K562 (cell line): ENCODE measurements at regions of chr9 and their contacts with region 1.

Region 1: GRCh38 chr9:121545875-121546423 is 46.3 kb upstream of the GGTA1 start:
- DNase-seq: peak; percentile 93 to 95 (median 94)
- ATAC-seq: peak; percentile 99
- H3K4me3 ChIP-seq: no peak overlapping the region
- H3K27ac ChIP-seq: no peak overlapping the region
- H3K4me1 ChIP-seq: peaks cover 0 to 18% of the 10 kb centered on the region in 2 experiments; a peak in 2 of 5 replicates
- H3K27me3 ChIP-seq: peaks cover 0 to 20% of the 10 kb centered on the region in 2 experiments; a peak in 2 of 5 replicates
- CTCF ChIP-seq: peak; percentile 91 to 95 (median 95)
- EP300 ChIP-seq: no peak
- POLR2A ChIP-seq: no peak
- RAD21 ChIP-seq: peak; percentile 88 to 90

Region 2: DNA sequence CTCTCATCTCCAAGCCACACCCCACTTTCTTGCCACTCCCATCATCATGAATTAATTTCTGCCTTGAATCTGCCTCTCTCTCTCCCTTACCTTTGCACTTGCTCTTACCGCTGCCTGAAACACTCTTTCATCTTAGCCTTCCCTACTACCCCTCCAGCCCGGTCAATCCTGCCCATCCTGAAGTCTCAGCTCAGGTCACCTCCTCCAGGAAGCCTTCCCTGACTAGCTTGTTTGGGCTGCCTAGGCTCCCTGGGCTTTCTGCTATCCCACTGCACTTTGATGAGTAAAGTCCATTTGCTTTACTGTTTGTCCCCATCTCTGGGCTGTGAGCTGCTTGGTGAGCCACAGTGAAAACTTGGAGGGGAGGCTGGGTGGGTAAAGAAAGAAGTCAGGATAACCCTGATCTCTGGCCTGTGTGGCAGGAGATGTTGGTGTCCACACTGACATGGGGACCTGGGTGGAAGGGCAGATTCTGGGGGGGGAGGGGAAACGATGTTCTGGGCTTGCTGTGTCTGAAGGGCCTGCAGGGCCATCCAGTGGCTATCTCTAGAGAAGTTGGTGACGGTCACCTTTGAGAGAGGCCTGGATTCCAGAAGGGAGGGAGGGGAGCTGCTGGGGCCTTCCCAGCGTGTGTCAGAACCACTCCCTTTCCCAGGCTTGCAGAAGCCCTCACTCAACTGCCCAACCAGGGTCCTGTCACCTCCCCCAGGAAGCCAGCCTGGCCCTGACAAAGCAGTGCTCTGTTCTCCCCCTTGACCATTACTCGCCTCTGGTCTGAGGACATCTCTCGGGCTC is 30.5 kb after region 1 on chr9:
- CTCF ChIA-PET with region 1: no interaction called
- POLR2A ChIA-PET with region 1: no interaction called
- in situ Hi-C with region 1: no loop called
- intact Hi-C with region 1: loop called (anchors 2 kb)
- DNase-seq: peak in 1 of 4 experiments; percentile 12
- ATAC-seq: peak; percentile 66
- H3K4me3 ChIP-seq: no peak overlapping the region
- H3K27ac ChIP-seq: no peak overlapping the region
- H3K4me1 ChIP-seq: peaks cover 0 to 7% of the 10 kb centered on the region in 2 experiments; a peak in 2 of 5 replicates
- H3K27me3 ChIP-seq: peaks cover 3 to 50% of the 10 kb centered on the region in 2 experiments; a peak in 3 of 5 replicates
- CTCF ChIP-seq: peak in 2 of 3 experiments; percentile 18 to 37; a peak in 3 of 6 replicates
- EP300 ChIP-seq: no peak
- POLR2A ChIP-seq: no peak
- RAD21 ChIP-seq: peak in 1 of 2 experiments; percentile 36; a peak in 1 of 4 replicates

Region 3: GRCh38 chr9:121621113-121621449 is 75.1 kb after region 1 on chr9:
- CTCF ChIA-PET with region 1: no interaction called
- POLR2A ChIA-PET with region 1: no interaction called
- in situ Hi-C with region 1: no loop called
- intact Hi-C with region 1: loop called (anchors 5 kb)
- DNase-seq: peak; percentile 50 to 67 (median 56)
- ATAC-seq: peak; percentile 96
- H3K4me3 ChIP-seq: no peak overlapping the region
- H3K27ac ChIP-seq: no peak overlapping the region
- H3K4me1 ChIP-seq: no peaks in the 10 kb centered on the region
- H3K27me3 ChIP-seq: peaks cover 3 to 34% of the 10 kb centered on the region in 2 experiments; a peak in 3 of 5 replicates
- CTCF ChIP-seq: peak; percentile 69 to 80 (median 76)
- EP300 ChIP-seq: no peak
- POLR2A ChIP-seq: no peak
- RAD21 ChIP-seq: peak; percentile 12 to 59; a peak in 2 of 4 replicates

Region 4: DNA sequence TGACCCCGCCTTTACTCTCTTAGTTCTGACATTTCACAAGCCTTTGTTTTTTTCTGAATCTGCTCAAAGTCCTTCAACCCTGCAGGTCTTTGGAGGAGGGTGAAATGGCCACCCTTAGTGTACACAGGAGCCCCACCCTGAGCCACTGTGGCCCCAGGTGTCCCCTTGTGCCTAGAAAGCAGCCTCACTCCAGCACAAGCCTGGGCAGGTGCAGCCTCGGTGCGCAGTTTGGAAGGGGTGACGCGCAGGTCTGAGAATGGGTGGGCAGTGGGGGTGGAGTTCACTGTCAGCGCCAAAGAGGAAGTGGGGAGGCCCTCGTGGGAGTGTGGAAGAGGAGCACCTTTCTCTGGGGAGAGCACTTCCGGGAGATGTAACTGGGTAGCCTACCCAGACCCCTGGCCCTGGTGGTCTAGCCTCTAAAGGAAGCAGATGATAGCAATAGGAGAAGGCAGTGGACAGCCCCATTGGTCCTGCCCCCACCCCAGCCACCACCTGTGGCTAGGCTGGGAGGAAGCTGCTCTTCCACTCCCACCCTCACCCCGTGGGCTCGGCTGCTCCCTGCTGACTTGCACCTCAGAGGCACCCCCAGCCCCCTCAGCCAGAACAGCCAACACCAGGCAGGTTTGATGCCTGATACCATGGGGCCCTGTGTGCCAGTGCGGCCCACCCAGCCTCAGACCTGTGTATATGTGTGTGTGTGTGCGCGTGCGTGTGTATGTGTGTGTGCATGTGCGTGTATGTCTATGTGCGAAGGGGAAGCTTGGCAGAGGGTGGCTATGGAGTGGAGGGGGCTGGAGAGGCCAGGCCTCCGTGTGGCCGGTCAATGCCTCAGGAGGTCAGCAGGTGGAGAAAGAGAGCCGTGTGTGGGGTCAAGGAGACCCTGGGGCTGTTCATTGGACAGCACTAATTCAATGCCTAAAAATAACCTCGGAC is 88.6 kb after region 1 on chr9:
- CTCF ChIA-PET with region 1: no interaction called
- POLR2A ChIA-PET with region 1: no interaction called
- in situ Hi-C with region 1: no loop called
- intact Hi-C with region 1: loop called (anchors 5 kb)
- DNase-seq: peak; percentile 55 to 67 (median 63)
- ATAC-seq: peak; percentile 95
- H3K4me3 ChIP-seq: no peak overlapping the region
- H3K27ac ChIP-seq: no peak overlapping the region
- H3K4me1 ChIP-seq: peaks cover 0 to 6% of the 10 kb centered on the region in 2 experiments; a peak in 2 of 5 replicates
- H3K27me3 ChIP-seq: peaks cover 0 to 51% of the 10 kb centered on the region in 2 experiments; a peak in 3 of 5 replicates
- CTCF ChIP-seq: peak; percentile 73 to 78 (median 77)
- EP300 ChIP-seq: no peak
- POLR2A ChIP-seq: no peak
- RAD21 ChIP-seq: peak; percentile 55 to 68

Region 5: GRCh38 chr9:121645003-121645402 is 99.1 kb after region 1 on chr9:
- CTCF ChIA-PET with region 1: no interaction called
- POLR2A ChIA-PET with region 1: no interaction called
- in situ Hi-C with region 1: no loop called
- intact Hi-C with region 1: no loop called
- DNase-seq: no peak
- ATAC-seq: no peak; the same call in 2 of the 3 replicates
- H3K4me3 ChIP-seq: no peak overlapping the region
- H3K27ac ChIP-seq: no peak overlapping the region
- H3K4me1 ChIP-seq: peaks cover 0 to under 1% of the 10 kb centered on the region in 2 experiments; a peak in 3 of 5 replicates
- H3K27me3 ChIP-seq: peaks cover 3 to 19% of the 10 kb centered on the region in 2 experiments; a peak in 4 of 5 replicates
- CTCF ChIP-seq: no peak
- EP300 ChIP-seq: no peak
- POLR2A ChIP-seq: no peak
- RAD21 ChIP-seq: no peak

Region 6: GRCh38 chr9:121686930-121687541 is 141.1 kb after region 1 on chr9:
- CTCF ChIA-PET with region 1: interaction called, 8 read pairs
- POLR2A ChIA-PET with region 1: interaction called, 3 read pairs
- in situ Hi-C with region 1: loop called (anchors 5 kb)
- intact Hi-C with region 1: loop called (anchors 1 kb)
- DNase-seq: peak; percentile 71 to 80 (median 74)
- ATAC-seq: peak; percentile 90
- H3K4me3 ChIP-seq: no peak overlapping the region
- H3K27ac ChIP-seq: no peak overlapping the region
- H3K4me1 ChIP-seq: no peaks in the 10 kb centered on the region
- H3K27me3 ChIP-seq: peaks cover 0 to 15% of the 10 kb centered on the region in 2 experiments; a peak in 3 of 5 replicates
- CTCF ChIP-seq: peak; percentile 80 to 87 (median 84)
- EP300 ChIP-seq: no peak
- POLR2A ChIP-seq: no peak
- RAD21 ChIP-seq: peak; percentile 51 to 81

Region 7: DNA sequence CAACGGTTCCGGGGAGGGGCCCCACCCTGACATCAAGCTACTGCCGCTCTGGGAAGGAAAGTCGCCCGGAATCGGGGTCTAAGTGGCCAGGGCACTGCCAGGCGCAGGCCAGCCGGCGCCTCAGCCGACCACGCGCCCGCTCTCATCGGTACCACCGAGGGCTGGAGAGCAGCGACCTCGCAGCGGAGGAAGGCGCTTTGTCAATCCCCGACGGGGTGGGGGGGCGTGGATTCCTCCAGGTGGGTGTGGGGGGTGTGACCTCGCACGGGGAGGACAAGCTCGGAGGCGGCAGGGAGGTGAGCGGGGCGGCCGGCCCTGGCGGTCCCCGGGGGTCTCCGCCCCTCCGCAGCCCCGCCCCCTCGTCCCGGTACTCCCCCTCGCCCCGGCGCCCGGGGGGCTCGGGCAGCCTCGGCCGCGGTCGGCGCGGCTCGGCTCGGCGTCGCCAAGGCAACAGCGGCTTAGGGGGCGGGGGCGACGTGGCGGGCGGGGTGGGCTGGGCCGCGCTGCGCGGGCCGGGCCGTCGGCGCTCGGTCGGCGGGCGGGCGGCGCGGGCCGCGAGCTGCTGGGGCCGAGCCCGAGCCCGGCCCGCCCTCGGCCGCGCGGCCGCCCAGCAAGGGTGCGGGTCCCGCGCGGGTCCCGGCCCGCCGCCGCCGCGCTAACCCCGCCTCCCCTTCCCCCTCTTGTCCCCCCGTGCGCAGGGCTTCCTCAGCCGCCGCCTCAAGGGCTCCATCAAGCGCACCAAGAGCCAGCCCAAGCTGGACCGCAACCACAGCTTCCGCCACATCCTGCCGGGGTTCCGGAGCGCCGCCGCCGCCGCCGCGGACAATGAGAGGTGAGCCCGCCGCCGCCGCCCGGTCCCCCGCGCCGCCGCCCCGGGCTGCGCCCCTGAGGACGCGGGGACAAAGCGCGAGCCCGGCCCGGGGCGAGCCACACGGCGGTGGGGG is 152.9 kb after region 1 on chr9:
- CTCF ChIA-PET with region 1: no interaction called
- POLR2A ChIA-PET with region 1: no interaction called
- in situ Hi-C with region 1: no loop called
- intact Hi-C with region 1: loop called (anchors 5 kb)
- DNase-seq: peak in 2 of 4 experiments; percentile 28 to 32
- ATAC-seq: no peak
- H3K4me3 ChIP-seq: no peak overlapping the region
- H3K27ac ChIP-seq: no peak overlapping the region
- H3K4me1 ChIP-seq: peaks cover 0 to 5% of the 10 kb centered on the region in 2 experiments; a peak in 1 of 5 replicates
- H3K27me3 ChIP-seq: peaks cover 17 to 58% of the 10 kb centered on the region in 2 experiments
- CTCF ChIP-seq: no peak
- EP300 ChIP-seq: no peak
- POLR2A ChIP-seq: no peak
- RAD21 ChIP-seq: no peak